ENCODE measurements at regions of chr5 and their contacts with region 1.

Region 1: GRCh38 chr5:147822686-147823491 is 8.6 kb downstream of the SPINK1 start:
- DNase-seq: peak; percentile 77
- H3K4me3 Mint-ChIP-seq: no peak overlapping the region
- H3K27ac Mint-ChIP-seq: no peak overlapping the region
- H3K4me1 Mint-ChIP-seq: peaks cover 4% of the 10 kb centered on the region
- H3K27me3 Mint-ChIP-seq: peaks cover 33% of the 10 kb centered on the region
- CTCF ChIP-seq: peak; percentile 96

Region 2: DNA sequence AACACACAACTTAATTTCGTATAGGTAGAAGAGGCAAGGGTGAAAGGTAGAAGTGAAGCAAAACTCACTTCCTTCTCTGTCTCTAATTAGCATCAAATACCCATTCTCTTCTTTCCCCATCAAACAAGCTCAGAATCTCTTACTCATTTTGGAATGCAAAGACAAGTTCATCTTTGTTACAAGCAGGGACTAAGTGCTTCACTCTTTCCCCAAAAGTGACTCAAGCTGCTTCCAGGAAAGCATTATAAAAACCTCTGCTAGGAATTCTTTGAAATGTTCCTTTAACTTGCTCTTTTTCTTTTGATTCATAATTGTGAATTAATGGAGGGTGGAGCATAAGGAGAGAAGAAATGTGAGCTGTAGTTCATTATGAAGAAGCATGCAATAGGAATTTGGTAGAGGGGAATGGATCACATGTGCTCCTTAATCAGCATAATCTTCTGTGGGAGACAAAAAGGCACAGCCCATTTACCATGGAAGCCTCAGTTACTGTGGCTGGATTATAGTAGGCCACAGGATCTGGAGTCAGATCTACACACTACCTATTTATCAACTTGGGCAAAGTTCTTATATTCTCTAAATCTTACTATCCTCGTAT is 203.5 kb before region 1 on chr5:
- CTCF ChIA-PET with region 1: interaction called, 298 read pairs
- POLR2A ChIA-PET with region 1: no interaction called
- intact Hi-C with region 1: no loop called
- DNase-seq: no peak
- H3K4me3 Mint-ChIP-seq: no peak overlapping the region
- H3K27ac Mint-ChIP-seq: no peak overlapping the region
- H3K4me1 Mint-ChIP-seq: no peaks in the 10 kb centered on the region
- H3K27me3 Mint-ChIP-seq: peaks cover 20% of the 10 kb centered on the region
- CTCF ChIP-seq: no peak

Region 3: DNA sequence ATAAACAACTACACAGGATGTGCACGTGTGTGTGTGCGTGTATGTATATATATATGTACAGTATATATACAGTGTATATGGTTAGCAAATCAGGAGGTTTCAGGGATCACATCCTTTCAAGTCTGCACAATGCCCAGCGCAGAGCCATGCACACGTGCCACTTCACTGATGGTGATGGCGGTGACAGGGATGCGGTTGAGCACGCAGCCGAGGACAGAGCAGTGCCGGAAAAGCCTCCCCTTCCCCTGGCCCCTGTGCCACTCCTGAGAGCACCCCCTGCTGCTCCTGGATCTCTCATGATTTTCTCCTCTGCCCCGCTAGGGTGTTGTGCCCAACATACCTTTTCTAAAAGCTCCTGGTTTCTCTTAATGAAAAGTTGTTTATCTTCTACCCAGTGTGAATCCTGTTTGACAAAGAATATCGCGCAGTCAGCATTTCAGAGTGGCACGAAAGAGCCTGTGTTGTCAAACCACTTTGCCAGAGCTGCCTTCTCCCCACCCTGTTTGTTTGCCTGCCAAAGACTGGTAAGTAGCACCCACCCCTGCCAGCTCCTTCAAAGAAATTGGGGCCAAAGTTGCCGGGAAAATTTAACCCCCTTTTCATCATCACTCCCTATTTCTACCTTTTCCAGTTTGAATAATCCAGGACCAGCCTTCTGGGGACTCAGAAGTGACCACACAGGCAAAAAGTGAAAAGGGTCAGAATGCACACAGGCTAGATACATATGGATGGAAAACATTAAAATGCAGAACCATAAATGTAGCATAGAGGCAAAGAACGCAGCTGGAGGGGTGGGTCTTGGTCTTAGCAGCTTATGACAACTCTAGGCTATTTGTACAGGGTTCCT is 186.8 kb before region 1 on chr5:
- CTCF ChIA-PET with region 1: interaction called, 298 read pairs
- POLR2A ChIA-PET with region 1: no interaction called
- intact Hi-C with region 1: no loop called
- DNase-seq: no peak
- H3K4me3 Mint-ChIP-seq: no peak overlapping the region
- H3K27ac Mint-ChIP-seq: no peak overlapping the region
- H3K4me1 Mint-ChIP-seq: no peaks in the 10 kb centered on the region
- H3K27me3 Mint-ChIP-seq: no peaks in the 10 kb centered on the region
- CTCF ChIP-seq: no peak

Region 4: DNA sequence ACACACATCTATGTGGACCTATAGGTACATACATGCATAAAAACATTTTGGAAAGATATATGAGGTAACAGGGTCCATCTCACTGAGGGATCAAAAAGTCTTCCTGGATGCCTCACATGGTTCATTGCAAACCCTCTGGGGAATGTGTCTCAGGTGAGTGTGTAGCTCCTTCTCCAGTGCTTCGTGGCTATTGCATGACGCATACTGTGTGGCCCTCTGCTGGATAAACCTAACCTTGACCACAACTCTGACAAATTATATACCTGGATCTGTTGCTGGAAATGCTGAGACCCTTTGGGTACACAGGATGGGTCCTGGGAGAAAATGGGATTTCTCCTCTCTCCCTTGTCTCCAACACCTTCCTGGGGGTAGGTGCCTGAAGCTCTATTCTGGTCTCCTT is 132.3 kb before region 1 on chr5:
- CTCF ChIA-PET with region 1: interaction called, 4 read pairs
- POLR2A ChIA-PET with region 1: interaction called, 4 read pairs
- intact Hi-C with region 1: loop called (anchors 1 kb)
- DNase-seq: peak; percentile 64
- H3K4me3 Mint-ChIP-seq: no peak overlapping the region
- H3K27ac Mint-ChIP-seq: no peak overlapping the region
- H3K4me1 Mint-ChIP-seq: no peaks in the 10 kb centered on the region
- H3K27me3 Mint-ChIP-seq: peaks cover 54% of the 10 kb centered on the region
- CTCF ChIP-seq: peak; percentile 26

Region 5: DNA sequence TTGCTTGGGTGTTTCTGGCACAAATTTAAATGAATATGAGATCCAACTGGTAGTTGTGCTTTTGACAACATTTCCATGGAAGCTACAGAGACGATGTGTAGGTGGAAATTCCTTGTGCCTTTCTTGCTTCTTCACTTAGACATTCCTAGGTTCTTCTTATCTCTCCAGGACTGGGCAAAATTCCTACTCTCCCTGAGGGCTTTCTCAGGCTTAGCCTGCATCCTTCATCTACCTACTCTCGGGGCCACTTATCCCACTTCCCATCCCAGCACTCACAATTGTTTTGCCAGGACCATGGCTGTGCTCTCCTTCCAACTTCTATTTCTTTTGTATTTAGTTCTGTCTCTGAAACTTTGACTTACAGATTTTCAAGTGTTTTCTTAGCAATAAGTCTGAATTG is 26.3 kb after region 1 on chr5:
- CTCF ChIA-PET with region 1: interaction called, 15 read pairs
- POLR2A ChIA-PET with region 1: interaction called, 3 read pairs
- intact Hi-C with region 1: no loop called
- DNase-seq: no peak
- H3K4me3 Mint-ChIP-seq: no peak overlapping the region
- H3K27ac Mint-ChIP-seq: no peak overlapping the region
- H3K4me1 Mint-ChIP-seq: no peaks in the 10 kb centered on the region
- H3K27me3 Mint-ChIP-seq: peaks cover 31% of the 10 kb centered on the region
- CTCF ChIP-seq: no peak